IMR-90 (cell line): ENCODE measurements at regions of chr12 and their contacts with region 1.

Region 1: GRCh38 chr12:50504798-50505385 is at the start of gene DIP2B:
- DNase-seq: peak; percentile 84
- ATAC-seq: peak; percentile 93
- H3K4me3 ChIP-seq: peak within 1 kb of the TSS; percentile 80
- H3K27ac ChIP-seq: peak within 1 kb of the TSS; percentile 90
- H3K4me1 ChIP-seq: peaks cover 2% of the 10 kb centered on the region; the same call in 1 of the 2 replicates
- H3K27me3 ChIP-seq: no peaks in the 10 kb centered on the region
- CTCF ChIP-seq: peak; percentile 95
- POLR2A ChIP-seq: 0 out of 2 replicates have a peak, but pooled peaks have one; percentile 1
- RAD21 ChIP-seq: peak; percentile 96
- total RNA-seq, gene DIP2B: 12.9 and 13.9 TPM in 2 replicates

Region 2: GRCh38 chr12:49716553-49716952 is 788.3 kb before region 1 on chr12:
- CTCF ChIA-PET with region 1: no interaction called
- POLR2A ChIA-PET with region 1: no interaction called
- dilution Hi-C with region 1: no loop called
- in situ Hi-C with region 1: no loop called
- intact Hi-C with region 1: no loop called
- DNase-seq: no peak
- ATAC-seq: no peak
- H3K4me3 ChIP-seq: no peak overlapping the region
- H3K27ac ChIP-seq: no peak overlapping the region
- H3K4me1 ChIP-seq: no peaks in the 10 kb centered on the region
- H3K27me3 ChIP-seq: peaks cover 21% of the 10 kb centered on the region
- CTCF ChIP-seq: no peak
- POLR2A ChIP-seq: no peak
- RAD21 ChIP-seq: no peak

Region 3: GRCh38 chr12:50620109-50620977 is 115.5 kb after region 1 on chr12:
- CTCF ChIA-PET with region 1: no interaction called
- POLR2A ChIA-PET with region 1: no interaction called
- dilution Hi-C with region 1: no loop called
- in situ Hi-C with region 1: no loop called
- intact Hi-C with region 1: loop called (anchors 5 kb)
- DNase-seq: peak; percentile 95
- ATAC-seq: peak; percentile 94
- H3K4me3 ChIP-seq: no peak overlapping the region
- H3K27ac ChIP-seq: peak overlapping the region; percentile 39
- H3K4me1 ChIP-seq: peaks cover 23% of the 10 kb centered on the region
- H3K27me3 ChIP-seq: no peaks in the 10 kb centered on the region
- CTCF ChIP-seq: 0 out of 2 replicates have a peak, but pooled peaks have one; percentile 17
- POLR2A ChIP-seq: no peak
- RAD21 ChIP-seq: no peak; the same call in 1 of the 2 replicates

Region 4: DNA sequence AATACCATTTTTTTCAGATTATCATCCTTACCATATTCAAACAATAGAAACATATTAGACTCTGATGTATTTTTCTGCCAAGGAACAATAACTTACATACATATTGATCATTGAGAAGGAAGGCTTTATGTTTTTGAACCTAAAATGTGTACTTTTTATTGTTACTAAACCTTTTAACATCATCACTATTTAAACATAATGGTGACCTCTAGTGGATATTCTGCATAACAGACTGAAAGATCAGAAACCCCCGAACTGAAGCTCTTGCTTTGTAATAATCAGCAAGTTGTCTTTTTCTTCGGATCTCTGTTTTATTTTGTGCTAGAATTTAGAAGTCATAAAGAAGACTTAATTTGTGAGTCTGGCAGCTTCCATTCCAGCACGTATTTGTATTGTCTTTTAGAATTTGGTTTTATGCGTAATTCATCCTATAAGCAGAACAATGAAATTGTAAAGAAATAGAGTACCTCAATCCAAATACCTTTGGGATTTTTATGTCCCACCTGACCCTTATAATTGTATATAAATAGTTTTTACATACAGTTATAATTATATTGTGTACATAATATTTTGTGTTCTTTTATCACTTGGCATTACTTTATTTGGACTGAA is 133.1 kb after region 1 on chr12:
- CTCF ChIA-PET with region 1: interaction called, 9 read pairs
- POLR2A ChIA-PET with region 1: no interaction called
- dilution Hi-C with region 1: no loop called
- in situ Hi-C with region 1: loop called (anchors 5 kb)
- intact Hi-C with region 1: loop called (anchors 1 kb)
- DNase-seq: peak; percentile 69
- ATAC-seq: peak; percentile 45; the same call in 1 of the 2 replicates
- H3K4me3 ChIP-seq: no peak overlapping the region
- H3K27ac ChIP-seq: no peak overlapping the region
- H3K4me1 ChIP-seq: peaks cover 7% of the 10 kb centered on the region
- H3K27me3 ChIP-seq: no peaks in the 10 kb centered on the region
- CTCF ChIP-seq: peak; percentile 71
- POLR2A ChIP-seq: no peak
- RAD21 ChIP-seq: peak; percentile 76

Region 5: GRCh38 chr12:50734409-50735263 is 229.7 kb after region 1 on chr12:
- CTCF ChIA-PET with region 1: no interaction called
- POLR2A ChIA-PET with region 1: no interaction called
- dilution Hi-C with region 1: no loop called
- in situ Hi-C with region 1: no loop called
- intact Hi-C with region 1: loop called (anchors 2 kb)
- DNase-seq: peak; percentile 33
- ATAC-seq: peak; percentile 44; the same call in 1 of the 2 replicates
- H3K4me3 ChIP-seq: no peak overlapping the region
- H3K27ac ChIP-seq: no peak overlapping the region
- H3K4me1 ChIP-seq: peaks cover 6% of the 10 kb centered on the region
- H3K27me3 ChIP-seq: no peaks in the 10 kb centered on the region
- CTCF ChIP-seq: peak; percentile 53
- POLR2A ChIP-seq: no peak
- RAD21 ChIP-seq: peak; percentile 66

Region 6: DNA sequence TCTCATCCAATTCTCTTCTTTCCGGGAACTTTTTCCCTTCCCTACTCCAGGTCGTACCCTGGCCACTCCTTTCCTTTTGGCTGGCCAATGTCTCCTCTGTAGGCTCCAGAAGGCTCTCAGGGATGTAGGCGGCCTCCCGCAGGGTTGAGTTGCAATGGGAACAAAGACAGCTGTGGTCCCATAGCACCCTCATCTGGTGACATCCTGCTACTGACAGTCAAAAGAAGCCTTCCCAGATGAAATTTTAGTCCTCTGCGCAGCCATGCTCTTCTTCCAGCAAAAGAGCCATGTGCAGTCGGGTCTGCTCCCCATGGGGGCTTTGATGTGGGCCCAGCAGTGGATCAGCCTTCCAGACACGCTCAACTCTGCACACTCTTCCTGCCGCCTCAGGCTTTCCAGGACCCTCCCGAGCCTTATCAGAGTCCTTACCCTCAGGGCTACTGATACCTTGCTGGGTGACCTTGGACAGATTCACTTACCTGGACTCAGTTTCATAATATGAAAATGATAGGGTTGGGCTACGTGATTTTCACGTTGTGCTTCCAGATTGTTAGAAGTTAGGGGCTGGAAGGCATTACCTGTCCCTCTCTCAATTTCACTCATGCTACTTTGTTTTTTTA is 847.1 kb after region 1 on chr12:
- CTCF ChIA-PET with region 1: no interaction called
- POLR2A ChIA-PET with region 1: no interaction called
- dilution Hi-C with region 1: no loop called
- in situ Hi-C with region 1: loop called (anchors 25 kb)
- intact Hi-C with region 1: no loop called
- DNase-seq: peak; percentile 66
- ATAC-seq: peak; percentile 80
- H3K4me3 ChIP-seq: no peak overlapping the region
- H3K27ac ChIP-seq: no peak overlapping the region
- H3K4me1 ChIP-seq: peaks cover 2% of the 10 kb centered on the region; the same call in 1 of the 2 replicates
- H3K27me3 ChIP-seq: no peaks in the 10 kb centered on the region
- CTCF ChIP-seq: peak; percentile 86
- POLR2A ChIP-seq: no peak
- RAD21 ChIP-seq: peak; percentile 88